Activated CD4-positive, alpha-beta memory T cell treated with anti-CD3 and anti-CD28 coated beads for 36 hours (primary cell): ENCODE measurements at regions of chr6 and their contacts with region 1.

Region 1: GRCh38 chr6:5003604-5004372 is at the start of gene RPP40:
- DNase-seq: peak; percentile 99
- H3K4me3 Mint-ChIP-seq: peak within 1 kb of the TSS; percentile 86
- H3K27ac Mint-ChIP-seq: peak within 1 kb of the TSS; percentile 95
- H3K4me1 Mint-ChIP-seq: peaks cover 9% of the 10 kb centered on the region
- H3K27me3 Mint-ChIP-seq: no peaks in the 10 kb centered on the region
- total RNA-seq, gene RPP40: 6.0 to 6.4 TPM

Region 2: DNA sequence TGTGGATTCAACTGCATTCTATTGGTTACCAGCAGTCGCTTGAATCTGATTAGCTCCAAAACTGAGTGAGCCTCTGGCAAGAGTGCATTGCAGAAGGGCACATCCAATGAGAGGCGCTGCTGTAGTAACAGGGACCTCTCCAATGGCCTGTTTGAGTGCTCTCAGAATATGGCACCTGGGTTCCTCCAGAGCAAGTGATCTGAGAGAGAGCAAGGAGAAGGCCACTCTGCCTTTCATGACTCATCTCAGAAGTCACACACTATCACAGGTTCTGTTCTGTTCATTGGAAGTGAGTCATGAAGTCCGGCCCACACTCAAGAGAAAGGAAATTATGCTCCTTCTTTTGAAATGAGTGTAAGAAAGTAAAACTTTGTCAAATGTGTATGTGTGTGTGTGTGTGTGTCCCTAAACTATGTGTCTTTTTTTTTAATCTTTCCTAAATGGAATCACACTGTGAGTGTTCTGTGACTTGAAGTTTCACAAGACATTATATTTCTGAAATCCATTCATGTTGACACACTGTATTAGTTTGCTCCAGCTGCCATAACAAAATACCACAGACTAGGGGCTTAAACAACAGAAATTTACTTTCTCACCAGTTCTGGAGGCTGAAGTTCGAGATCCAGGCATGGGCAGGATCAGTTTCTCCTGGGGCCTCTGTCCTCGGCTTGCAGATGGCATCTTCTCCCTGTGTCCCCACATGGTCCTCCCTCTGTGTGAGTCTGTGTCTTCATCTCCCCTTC is 365.9 kb before region 1 on chr6:
- CTCF ChIA-PET with region 1: no interaction called
- POLR2A ChIA-PET with region 1: no interaction called
- intact Hi-C with region 1: loop called (anchors 5 kb)
- DNase-seq: peak; percentile 61
- H3K4me3 Mint-ChIP-seq: no peak overlapping the region
- H3K27ac Mint-ChIP-seq: peak overlapping the region; percentile 51
- H3K4me1 Mint-ChIP-seq: peaks cover 21% of the 10 kb centered on the region
- H3K27me3 Mint-ChIP-seq: peaks cover 24% of the 10 kb centered on the region

Region 3: GRCh38 chr6:5030596-5031136 is 26.9 kb after region 1 on chr6:
- CTCF ChIA-PET with region 1: interaction called, 14 read pairs
- POLR2A ChIA-PET with region 1: no interaction called
- intact Hi-C with region 1: no loop called
- DNase-seq: peak; percentile 88
- H3K4me3 Mint-ChIP-seq: no peak overlapping the region
- H3K27ac Mint-ChIP-seq: no peak overlapping the region
- H3K4me1 Mint-ChIP-seq: peaks cover 9% of the 10 kb centered on the region
- H3K27me3 Mint-ChIP-seq: peaks cover 3% of the 10 kb centered on the region

Region 4: DNA sequence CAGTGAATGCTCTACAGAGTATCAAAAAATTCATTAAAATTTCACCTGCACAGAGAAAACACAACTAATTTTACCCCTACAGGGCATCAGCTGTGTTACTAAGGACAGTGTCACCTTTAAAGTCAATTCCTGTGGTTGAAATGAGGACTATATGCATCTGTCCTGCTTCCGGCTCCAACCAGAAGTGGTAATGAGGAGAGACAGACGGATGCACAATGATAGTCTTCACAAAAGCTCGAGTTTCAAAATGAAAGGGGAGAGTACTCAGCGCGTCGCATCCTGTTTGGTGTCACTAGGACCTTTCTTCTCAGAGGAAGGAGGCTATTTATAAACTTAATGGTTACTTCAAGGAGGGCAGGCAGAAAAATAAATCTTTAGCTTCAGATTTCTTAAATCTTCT is 170.5 kb after region 1 on chr6:
- CTCF ChIA-PET with region 1: no interaction called
- POLR2A ChIA-PET with region 1: no interaction called
- intact Hi-C with region 1: loop called (anchors 5 kb)
- DNase-seq: peak; percentile 78
- H3K4me3 Mint-ChIP-seq: peak overlapping the region; percentile 27
- H3K27ac Mint-ChIP-seq: peak overlapping the region; percentile 71
- H3K4me1 Mint-ChIP-seq: peaks cover 40% of the 10 kb centered on the region
- H3K27me3 Mint-ChIP-seq: no peaks in the 10 kb centered on the region

Region 5: GRCh38 chr6:5260661-5261544 is 257.1 kb after region 1 on chr6 and contains the starts of genes FARS2 and LYRM4:
- CTCF ChIA-PET with region 1: no interaction called
- POLR2A ChIA-PET with region 1: interaction called, 4 read pairs
- intact Hi-C with region 1: loop called (anchors 1 kb)
- DNase-seq: peak; percentile 93
- H3K4me3 Mint-ChIP-seq: peak within 1 kb of the TSS; percentile 98
- H3K27ac Mint-ChIP-seq: peak within 1 kb of the TSS; percentile 99
- H3K4me1 Mint-ChIP-seq: peaks cover 36% of the 10 kb centered on the region
- H3K27me3 Mint-ChIP-seq: no peaks in the 10 kb centered on the region
- total RNA-seq, gene FARS2: 22.7 to 23.7 TPM
- total RNA-seq, gene LYRM4: 50.6 to 53.6 TPM